AG04450 (cell line): ENCODE measurements at regions of chr13 and their contacts with region 1.

Region 1: DNA sequence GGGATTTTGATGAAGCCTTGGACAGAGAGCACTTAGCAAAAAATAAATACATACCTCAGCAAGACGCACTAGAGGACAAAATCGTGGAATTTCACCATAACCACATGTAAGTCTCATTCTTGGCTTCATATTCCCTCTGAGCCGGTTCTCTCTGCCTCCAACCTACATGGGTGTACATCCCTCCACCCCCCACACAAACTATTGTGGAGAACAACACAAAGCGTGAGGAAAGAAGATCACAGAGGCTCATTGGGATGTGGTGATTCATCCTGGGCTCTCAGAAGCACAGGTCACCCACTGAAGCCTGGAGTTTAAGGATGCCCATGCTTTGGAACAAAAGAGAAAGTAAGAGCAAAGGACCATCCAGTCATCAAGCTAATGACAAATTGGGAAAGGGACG is 192.2 kb downstream of the STK24 start:
- DNase-seq: no peak
- H3K4me3 ChIP-seq: no peak overlapping the region
- H3K27ac ChIP-seq: peak overlapping the region; percentile 31
- H3K27me3 ChIP-seq: no peaks in the 10 kb centered on the region
- CTCF ChIP-seq: no peak

Region 2: DNA sequence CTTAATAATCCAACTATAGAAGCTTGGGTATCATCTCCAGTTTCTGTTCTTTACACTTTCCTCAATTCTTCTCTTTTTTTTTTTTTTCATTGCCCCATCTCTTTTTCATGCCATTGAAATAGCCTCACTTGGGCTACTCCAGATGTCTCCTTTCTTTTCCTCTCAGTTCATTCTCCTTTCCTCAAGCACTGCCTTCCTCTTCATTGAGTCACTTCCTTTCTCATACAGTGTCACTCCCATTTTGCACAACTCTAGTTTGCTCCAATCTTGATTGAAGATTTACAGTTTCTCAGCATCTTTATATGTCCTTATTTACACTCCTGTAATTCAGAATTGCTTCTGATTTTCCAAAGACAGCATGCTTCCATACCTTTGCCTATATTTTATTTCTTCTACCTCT is 370.0 kb before region 1 on chr13:
- CTCF ChIA-PET with region 1: no interaction called
- POLR2A ChIA-PET with region 1: no interaction called
- DNase-seq: peak; percentile 64
- H3K4me3 ChIP-seq: no peak overlapping the region
- H3K27ac ChIP-seq: peak overlapping the region; percentile 53
- H3K27me3 ChIP-seq: no peaks in the 10 kb centered on the region
- CTCF ChIP-seq: no peak

Region 3: DNA sequence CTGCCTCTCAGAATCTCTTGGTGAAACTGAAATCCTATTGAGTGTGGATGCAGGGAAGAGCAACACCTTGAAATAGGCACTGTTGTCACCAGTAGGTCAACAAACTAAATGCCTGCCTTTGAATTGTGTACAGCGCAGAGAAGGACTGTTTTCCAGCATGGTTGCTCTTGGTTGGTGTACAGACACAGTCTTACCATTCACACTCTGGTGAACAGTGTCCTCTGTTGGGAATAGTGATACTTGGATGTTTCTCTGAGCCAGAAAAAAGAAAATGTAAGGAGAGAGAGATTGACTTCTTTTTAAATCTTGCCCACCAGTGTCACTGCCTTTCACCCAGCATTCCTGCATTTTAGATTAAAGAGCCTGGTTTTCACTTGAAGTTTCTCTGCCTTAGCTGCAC is 12.5 kb after region 1 on chr13:
- CTCF ChIA-PET with region 1: interaction called, 10 read pairs
- POLR2A ChIA-PET with region 1: no interaction called
- DNase-seq: no peak
- H3K4me3 ChIP-seq: no peak overlapping the region
- H3K27ac ChIP-seq: no peak overlapping the region
- H3K27me3 ChIP-seq: no peaks in the 10 kb centered on the region
- CTCF ChIP-seq: peak; percentile 55

Region 4: GRCh38 chr13:98451676-98452470 is 67.1 kb after region 1 on chr13:
- CTCF ChIA-PET with region 1: no interaction called
- POLR2A ChIA-PET with region 1: no interaction called
- DNase-seq: no peak
- H3K4me3 ChIP-seq: no peak overlapping the region
- H3K27ac ChIP-seq: peak overlapping the region; percentile 22
- H3K27me3 ChIP-seq: no peaks in the 10 kb centered on the region
- CTCF ChIP-seq: no peak

Region 5: GRCh38 chr13:98542568-98543377 is 158.0 kb after region 1 on chr13:
- CTCF ChIA-PET with region 1: no interaction called
- POLR2A ChIA-PET with region 1: no interaction called
- DNase-seq: no peak
- H3K4me3 ChIP-seq: no peak overlapping the region
- H3K27ac ChIP-seq: no peak overlapping the region
- H3K27me3 ChIP-seq: no peaks in the 10 kb centered on the region
- CTCF ChIP-seq: no peak